AG04449 (cell line): ENCODE measurements at regions of chr21 and their contacts with region 1.

Region 1: DNA sequence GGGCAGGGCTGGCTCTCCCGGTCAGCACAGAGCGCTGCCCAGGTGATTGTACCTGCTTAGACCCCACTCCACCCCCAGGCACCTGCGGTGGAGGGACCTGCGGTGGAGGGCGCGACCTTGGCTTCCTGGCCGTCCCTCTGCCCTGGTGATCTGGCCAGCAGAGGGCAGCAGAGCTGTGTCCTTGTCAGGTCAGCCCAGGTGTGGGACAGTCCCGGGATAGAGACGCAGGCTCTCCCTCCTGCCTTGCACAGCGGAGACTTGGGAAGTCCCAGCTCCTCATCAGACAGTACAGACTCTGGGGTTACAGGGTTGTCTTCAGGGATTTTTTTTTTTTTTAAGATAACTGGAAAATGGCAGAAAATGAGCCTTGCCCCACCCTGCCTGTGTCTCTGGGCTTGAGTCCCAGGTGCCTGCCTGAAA is 10.0 kb downstream of the SLX9 start:
- DNase-seq: no peak
- H3K4me3 ChIP-seq: no peak overlapping the region
- CTCF ChIP-seq: peak; percentile 98

Region 2: GRCh38 chr21:43842742-43843141 is 1107.0 kb before region 1 on chr21:
- CTCF ChIA-PET with region 1: no interaction called
- POLR2A ChIA-PET with region 1: no interaction called
- DNase-seq: no peak
- H3K4me3 ChIP-seq: no peak overlapping the region
- CTCF ChIP-seq: no peak

Region 3: GRCh38 chr21:44939532-44940115 is 10.2 kb before region 1 on chr21 and contains the start of gene SLX9:
- CTCF ChIA-PET with region 1: interaction called, 23 read pairs
- POLR2A ChIA-PET with region 1: interaction called, 3 read pairs
- DNase-seq: no peak
- H3K4me3 ChIP-seq: peak within 1 kb of the TSS; percentile 91
- CTCF ChIP-seq: no peak

Region 4: GRCh38 chr21:44969931-44970755 is 20.4 kb after region 1 on chr21:
- CTCF ChIA-PET with region 1: interaction called, 10 read pairs
- POLR2A ChIA-PET with region 1: no interaction called
- DNase-seq: no peak
- H3K4me3 ChIP-seq: no peak overlapping the region
- CTCF ChIP-seq: no peak

Region 5: GRCh38 chr21:45109831-45110492 is 160.2 kb after region 1 on chr21:
- CTCF ChIA-PET with region 1: interaction called, 17 read pairs
- POLR2A ChIA-PET with region 1: no interaction called
- DNase-seq: no peak
- H3K4me3 ChIP-seq: no peak overlapping the region
- CTCF ChIP-seq: no peak

Region 6: DNA sequence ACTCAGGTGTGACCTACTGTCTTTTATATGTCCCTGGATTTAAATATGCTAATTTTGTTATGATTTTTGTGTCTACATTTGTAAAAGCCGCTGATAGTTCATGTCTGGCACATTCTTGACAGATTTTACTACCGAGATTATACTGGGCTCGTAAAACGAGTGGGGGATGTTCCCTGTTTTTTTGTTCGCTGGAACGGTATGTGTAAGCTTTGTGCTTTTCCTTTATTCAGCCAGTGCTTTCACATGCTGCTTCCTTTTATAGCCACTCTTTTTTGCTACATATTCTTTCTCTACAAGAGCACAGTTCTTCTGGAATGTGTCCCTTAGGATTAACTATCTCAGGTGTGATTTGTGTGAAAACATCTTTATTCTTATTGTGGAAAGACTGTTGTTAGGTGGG is 171.2 kb after region 1 on chr21:
- CTCF ChIA-PET with region 1: interaction called, 270 read pairs
- POLR2A ChIA-PET with region 1: no interaction called
- DNase-seq: no peak
- H3K4me3 ChIP-seq: no peak overlapping the region
- CTCF ChIP-seq: no peak